ENCODE measurements at regions of chr6 and their contacts with region 1.

Region 1: GRCh38 chr6:47787620-47788497 is 6.0 kb downstream of the OPN5 start:
- DNase-seq: peak in 1 of 2 donors; percentile 14
- ATAC-seq: peak; percentile 56 to 79
- H3K4me3 ChIP-seq: peak overlapping the region in 3 of 4 donors; percentile 10 to 23 (median 13)
- H3K27ac ChIP-seq: no peak overlapping the region
- H3K4me1 ChIP-seq: no peaks in the 10 kb centered on the region
- H3K27me3 ChIP-seq: no peaks in the 10 kb centered on the region
- CTCF ChIP-seq: peak; percentile 55 to 83 (median 69)
- POLR2A ChIP-seq: no peak

Region 2: GRCh38 chr6:49409951-49410542 is 1622.2 kb after region 1 on chr6:
- in situ Hi-C with region 1: loop called (anchors 10 to 25 kb)
- intact Hi-C with region 1: loop called (anchors 5 kb)
- DNase-seq: peak in 1 of 2 donors; percentile 26
- ATAC-seq: peak; percentile 66
- H3K4me3 ChIP-seq: no peak overlapping the region
- H3K27ac ChIP-seq: no peak overlapping the region
- H3K4me1 ChIP-seq: no peaks in the 10 kb centered on the region
- H3K27me3 ChIP-seq: no peaks in the 10 kb centered on the region
- CTCF ChIP-seq: peak; percentile 56 to 79 (median 64)
- POLR2A ChIP-seq: no peak